Heart right ventricle (tissue), 16 donors: ENCODE measurements at regions of chr19 and their contacts with region 1.

Region 1: GRCh38 chr19:53511933-53512374 is 26.0 kb upstream of the ZNF331 start:
- DNase-seq: peak; percentile 45 to 51
- ATAC-seq: peak; percentile 38 to 87 (median 77)
- H3K4me3 ChIP-seq: no peak overlapping the region
- H3K27ac ChIP-seq: no peak overlapping the region
- H3K4me1 ChIP-seq: peaks cover 0 to 5% (median 0%) of the 10 kb centered on the region in 9 donors
- H3K27me3 ChIP-seq: peaks cover 0 to 18% (median 0%) of the 10 kb centered on the region in 7 donors
- CTCF ChIP-seq: peak; percentile 40 to 79 (median 72)

Region 2: DNA sequence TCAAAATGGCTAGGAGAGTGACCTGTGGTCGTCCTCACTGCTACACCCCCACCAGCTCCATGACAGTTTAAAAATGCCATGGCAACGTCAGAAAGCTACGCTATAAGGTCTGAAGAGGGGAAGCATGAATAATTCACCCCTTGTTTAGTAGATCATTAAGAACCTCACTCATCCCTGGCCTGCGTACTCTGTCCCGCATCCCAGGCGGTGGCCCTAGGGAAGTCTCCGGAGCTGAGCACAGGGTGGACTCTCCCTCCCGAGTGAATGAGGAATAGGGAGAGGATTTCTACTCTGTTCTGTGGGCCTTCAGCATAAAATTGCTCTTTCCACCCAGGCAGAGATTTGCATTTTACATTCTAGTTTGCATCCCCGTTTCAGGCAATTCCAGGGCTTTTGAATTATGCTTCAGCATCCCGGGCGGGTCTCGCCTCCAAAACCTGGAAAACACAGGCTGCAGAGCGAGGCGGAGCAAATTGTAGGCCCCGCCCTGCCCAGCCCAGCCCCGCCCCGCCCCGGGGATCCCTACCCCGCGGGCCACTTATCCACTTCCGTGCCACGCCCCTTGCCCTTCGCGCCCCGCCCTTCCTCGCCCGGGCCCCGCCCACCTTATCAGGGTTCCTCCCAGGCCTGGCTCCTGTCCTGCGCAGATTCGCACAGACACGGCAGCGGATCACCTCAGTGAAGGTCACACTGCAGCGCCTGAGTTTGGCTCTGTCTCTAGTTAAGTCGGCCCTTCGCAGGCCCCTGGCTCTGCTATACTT is 154.0 kb before region 1 on chr19:
- intact Hi-C with region 1: no loop called
- DNase-seq: peak in 1 of 2 donors; percentile 27
- ATAC-seq: peak in 2 of 8 donors; percentile 20 to 44
- H3K4me3 ChIP-seq: no peak overlapping the region
- H3K27ac ChIP-seq: no peak overlapping the region
- H3K4me1 ChIP-seq: no peaks in the 10 kb centered on the region
- H3K27me3 ChIP-seq: no peaks in the 10 kb centered on the region
- CTCF ChIP-seq: no peak

Region 3: DNA sequence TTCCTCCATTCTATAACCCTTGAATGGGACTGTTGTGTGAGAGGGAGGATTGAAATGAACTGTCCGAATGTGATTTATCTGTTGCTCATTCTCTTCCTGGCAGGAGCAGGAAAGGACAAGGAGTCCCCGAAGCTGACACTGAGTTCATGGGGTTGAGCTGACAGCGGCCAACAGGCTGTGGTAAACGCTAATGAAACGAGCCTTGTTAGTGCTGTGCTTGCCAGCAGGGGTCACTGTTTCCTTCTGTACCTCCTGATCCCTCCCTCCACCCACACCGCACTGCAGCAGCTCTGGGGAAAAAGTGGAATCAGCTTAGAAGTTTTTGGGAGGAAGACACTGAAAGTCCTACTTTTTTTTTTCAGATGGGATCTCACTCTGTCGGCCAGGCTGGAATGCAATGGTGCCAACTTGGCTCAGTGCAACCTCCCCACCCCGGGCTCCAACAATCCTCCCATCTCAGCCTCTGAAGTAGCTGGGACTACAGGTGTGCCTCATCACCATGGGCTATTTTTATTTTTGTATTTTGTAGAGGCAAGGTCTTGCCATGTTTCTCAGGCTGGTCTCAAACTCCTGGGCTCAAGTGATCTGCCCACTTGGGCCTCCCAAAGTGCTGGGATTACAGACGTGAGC is 86.9 kb before region 1 on chr19:
- intact Hi-C with region 1: loop called in 9 of 10 experiments (anchors 1 to 10 kb)
- DNase-seq: peak; percentile 56 to 78
- ATAC-seq: peak; percentile 84 to 94 (median 90)
- H3K4me3 ChIP-seq: no peak overlapping the region
- H3K27ac ChIP-seq: no peak overlapping the region
- H3K4me1 ChIP-seq: no peaks in the 10 kb centered on the region
- H3K27me3 ChIP-seq: no peaks in the 10 kb centered on the region
- CTCF ChIP-seq: peak; percentile 75 to 88 (median 86)